CD8-positive, alpha-beta T cell (primary cell): ENCODE measurements at regions of chr2 and their contacts with region 1.

Region 1: DNA sequence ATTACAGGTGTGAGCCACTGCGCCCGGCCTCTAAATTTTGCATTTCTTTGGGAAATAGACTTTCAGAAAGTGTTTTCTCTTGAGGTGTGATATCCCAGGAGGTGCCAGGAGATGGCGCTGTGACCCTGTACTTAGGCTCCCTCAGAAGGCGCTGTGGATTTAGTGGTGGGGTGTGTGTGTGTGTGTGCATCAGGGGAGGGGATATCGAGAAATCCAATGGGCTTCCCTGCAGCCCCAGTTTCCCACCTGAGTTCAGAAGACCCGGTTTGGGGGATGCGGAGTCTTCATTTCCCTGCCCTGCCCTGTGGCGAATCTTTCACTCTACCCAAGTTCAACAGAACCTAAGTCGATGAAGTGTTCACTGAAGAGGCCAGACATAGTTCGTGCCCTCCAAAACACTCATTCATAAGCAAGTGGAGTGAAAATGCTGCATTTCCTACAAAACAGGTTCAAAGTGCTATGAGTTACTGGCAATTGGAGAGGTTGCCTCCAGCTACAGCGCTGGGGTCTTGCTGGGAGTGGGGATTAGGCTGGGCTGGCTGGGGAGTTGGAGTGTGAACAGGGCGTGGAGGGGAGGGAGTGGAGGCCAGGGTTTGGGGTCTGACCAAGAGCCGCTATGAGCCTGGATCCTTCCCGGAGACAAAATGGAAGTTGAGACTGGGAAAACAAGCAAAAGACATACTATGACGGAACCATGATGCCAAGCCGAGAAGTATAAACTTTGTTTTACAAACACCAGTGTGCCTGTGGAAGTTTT is 6.5 kb upstream of the WNT6 start:
- DNase-seq: peak; percentile 36 to 80 (median 70)
- ATAC-seq: peak; percentile 90
- H3K4me3 ChIP-seq: no peak overlapping the region
- H3K4me3 Mint-ChIP-seq: no peak overlapping the region
- H3K27ac ChIP-seq: no peak overlapping the region
- H3K27ac Mint-ChIP-seq: no peak overlapping the region
- H3K4me1 ChIP-seq: no peaks in the 10 kb centered on the region
- H3K4me1 Mint-ChIP-seq: peaks cover 3% of the 10 kb centered on the region
- H3K27me3 ChIP-seq: peaks cover 15 to 22% of the 10 kb centered on the region in 2 experiments
- H3K27me3 Mint-ChIP-seq: peaks cover 66% of the 10 kb centered on the region
- CTCF ChIP-seq: peak; percentile 80

Region 2: GRCh38 chr2:218727502-218728165 is 125.5 kb before region 1 on chr2:
- CTCF ChIA-PET with region 1: interaction called, 3 read pairs
- POLR2A ChIA-PET with region 1: no interaction called
- intact Hi-C with region 1: loop called in 1 of 2 experiments (anchors 5 kb)
- DNase-seq: peak in 2 of 9 experiments; percentile 15 to 29
- ATAC-seq: no peak
- H3K4me3 ChIP-seq: no peak overlapping the region
- H3K4me3 Mint-ChIP-seq: no peak overlapping the region
- H3K27ac ChIP-seq: no peak overlapping the region
- H3K27ac Mint-ChIP-seq: no peak overlapping the region
- H3K4me1 ChIP-seq: no peaks in the 10 kb centered on the region
- H3K4me1 Mint-ChIP-seq: peaks cover 11% of the 10 kb centered on the region
- H3K27me3 ChIP-seq: no peaks in the 10 kb centered on the region
- H3K27me3 Mint-ChIP-seq: no peaks in the 10 kb centered on the region
- CTCF ChIP-seq: no peak

Region 3: GRCh38 chr2:218898109-218898878 is 45.2 kb after region 1 on chr2:
- CTCF ChIA-PET with region 1: interaction called, 112 read pairs
- POLR2A ChIA-PET with region 1: no interaction called
- intact Hi-C with region 1: loop called (anchors 1 kb)
- DNase-seq: peak; percentile 60 to 90 (median 81)
- ATAC-seq: peak; percentile 10
- H3K4me3 ChIP-seq: peak overlapping the region in 1 of 2 experiments; percentile 57
- H3K4me3 Mint-ChIP-seq: peak overlapping the region; percentile 80
- H3K27ac ChIP-seq: no peak overlapping the region
- H3K27ac Mint-ChIP-seq: no peak overlapping the region
- H3K4me1 ChIP-seq: peaks cover 54% of the 10 kb centered on the region
- H3K4me1 Mint-ChIP-seq: peaks cover 45% of the 10 kb centered on the region
- H3K27me3 ChIP-seq: peaks cover 7 to 33% of the 10 kb centered on the region in 2 experiments
- H3K27me3 Mint-ChIP-seq: peaks cover 30% of the 10 kb centered on the region
- CTCF ChIP-seq: peak; percentile 99

Region 4: GRCh38 chr2:218927422-218927821 is 74.3 kb after region 1 on chr2:
- CTCF ChIA-PET with region 1: no interaction called
- POLR2A ChIA-PET with region 1: no interaction called
- intact Hi-C with region 1: no loop called
- DNase-seq: no peak
- ATAC-seq: no peak
- H3K4me3 ChIP-seq: no peak overlapping the region
- H3K4me3 Mint-ChIP-seq: no peak overlapping the region
- H3K27ac ChIP-seq: no peak overlapping the region
- H3K27ac Mint-ChIP-seq: no peak overlapping the region
- H3K4me1 ChIP-seq: no peaks in the 10 kb centered on the region
- H3K4me1 Mint-ChIP-seq: no peaks in the 10 kb centered on the region
- H3K27me3 ChIP-seq: peaks cover 0 to 1% of the 10 kb centered on the region in 2 experiments
- H3K27me3 Mint-ChIP-seq: peaks cover 43% of the 10 kb centered on the region
- CTCF ChIP-seq: no peak

Region 5: GRCh38 chr2:219002395-219003266 is 149.5 kb after region 1 on chr2:
- CTCF ChIA-PET with region 1: no interaction called
- POLR2A ChIA-PET with region 1: no interaction called
- intact Hi-C with region 1: loop called in 1 of 2 experiments (anchors 2 kb)
- DNase-seq: peak in 5 of 9 experiments; percentile 40 to 67 (median 56)
- ATAC-seq: peak; percentile 69
- H3K4me3 ChIP-seq: peak overlapping the region; percentile 15 to 41
- H3K4me3 Mint-ChIP-seq: peak overlapping the region; percentile 79
- H3K27ac ChIP-seq: no peak overlapping the region
- H3K27ac Mint-ChIP-seq: no peak overlapping the region
- H3K4me1 ChIP-seq: peaks cover 25% of the 10 kb centered on the region
- H3K4me1 Mint-ChIP-seq: peaks cover 15% of the 10 kb centered on the region
- H3K27me3 ChIP-seq: peaks cover 26 to 34% of the 10 kb centered on the region in 2 experiments
- H3K27me3 Mint-ChIP-seq: peaks cover 64% of the 10 kb centered on the region
- CTCF ChIP-seq: peak; percentile 48

Region 6: DNA sequence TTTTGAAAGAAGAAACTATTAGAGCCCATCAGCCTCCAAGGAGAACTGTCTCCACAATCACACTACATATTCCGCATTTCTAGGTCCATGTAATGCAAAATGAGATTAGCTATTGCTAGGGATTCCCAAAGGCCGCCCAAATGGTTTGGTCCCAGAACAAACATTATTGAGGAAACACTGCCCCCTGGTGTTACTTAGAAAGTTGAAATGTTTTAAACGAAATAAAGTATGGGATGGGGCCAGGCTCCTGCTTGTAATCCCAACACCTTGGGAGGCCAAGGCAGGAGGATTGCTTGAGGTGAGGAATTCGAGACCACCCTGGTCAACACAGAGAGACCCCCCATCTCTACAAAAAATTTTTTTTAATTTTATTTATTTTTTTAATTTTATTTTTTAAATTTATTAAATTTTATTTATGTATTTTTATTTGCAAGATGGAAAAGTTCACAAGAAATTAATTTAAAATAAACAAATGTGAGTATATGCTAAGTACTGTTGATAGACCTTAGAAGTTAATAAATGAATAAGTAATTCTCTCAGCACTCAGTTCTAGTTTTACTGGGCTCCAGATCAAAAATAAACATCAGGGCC is 302.1 kb after region 1 on chr2:
- CTCF ChIA-PET with region 1: no interaction called
- POLR2A ChIA-PET with region 1: no interaction called
- intact Hi-C with region 1: loop called in 1 of 2 experiments (anchors 2 kb)
- DNase-seq: peak in 5 of 9 experiments; percentile 5 to 83 (median 52)
- ATAC-seq: peak; percentile 12
- H3K4me3 ChIP-seq: no peak overlapping the region
- H3K4me3 Mint-ChIP-seq: no peak overlapping the region
- H3K27ac ChIP-seq: no peak overlapping the region
- H3K27ac Mint-ChIP-seq: no peak overlapping the region
- H3K4me1 ChIP-seq: peaks cover 6% of the 10 kb centered on the region
- H3K4me1 Mint-ChIP-seq: peaks cover 7% of the 10 kb centered on the region
- H3K27me3 ChIP-seq: no peaks in the 10 kb centered on the region
- H3K27me3 Mint-ChIP-seq: no peaks in the 10 kb centered on the region
- CTCF ChIP-seq: peak; percentile 82